IMR-90 (cell line): ENCODE measurements at regions of chr1 and their contacts with region 1.

Region 1: DNA sequence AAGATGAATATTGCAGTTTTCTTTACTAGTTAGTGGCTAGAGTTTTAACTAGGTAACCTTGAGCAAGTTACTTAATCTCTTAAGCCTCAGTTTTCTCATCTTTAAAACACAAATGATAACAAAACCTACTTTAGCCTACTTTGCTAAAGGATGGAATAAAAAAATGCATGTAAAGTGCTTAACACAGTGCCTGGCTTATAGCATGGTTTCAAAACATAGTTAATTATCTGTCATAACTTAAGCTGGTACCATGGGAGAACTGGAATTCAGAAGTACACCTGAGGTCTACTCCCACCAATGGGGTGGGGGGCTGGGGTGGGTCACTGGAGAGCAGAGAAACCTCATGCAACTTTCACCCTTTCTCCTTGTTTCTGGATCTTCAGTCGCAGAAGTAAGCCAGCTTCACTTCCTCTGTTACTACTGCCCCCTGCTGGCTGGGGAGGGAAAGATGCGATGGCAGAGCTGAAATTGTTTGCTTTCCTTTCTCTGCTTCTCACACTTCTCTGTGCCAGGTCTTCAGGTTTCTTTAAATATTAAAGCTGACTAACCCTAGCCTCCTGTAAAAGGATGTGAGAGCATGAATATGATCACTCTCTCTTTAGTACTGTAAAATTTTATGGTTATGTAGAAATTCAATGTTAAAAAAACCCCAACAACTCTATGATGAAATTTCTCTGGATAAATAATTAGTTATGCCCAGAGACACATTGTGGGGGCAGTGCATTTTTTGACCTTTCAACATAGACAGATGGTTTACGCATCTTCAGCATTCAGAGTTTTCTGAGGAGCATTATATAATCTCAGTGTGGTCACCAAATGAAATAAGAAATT is 324.2 kb downstream of the HLX start:
- DNase-seq: peak; percentile 74
- ATAC-seq: peak; percentile 78
- H3K4me3 ChIP-seq: no peak overlapping the region
- H3K27ac ChIP-seq: no peak overlapping the region
- H3K4me1 ChIP-seq: no peaks in the 10 kb centered on the region
- H3K27me3 ChIP-seq: no peaks in the 10 kb centered on the region
- CTCF ChIP-seq: peak; percentile 89
- POLR2A ChIP-seq: no peak
- RAD21 ChIP-seq: peak; percentile 90

Region 2: DNA sequence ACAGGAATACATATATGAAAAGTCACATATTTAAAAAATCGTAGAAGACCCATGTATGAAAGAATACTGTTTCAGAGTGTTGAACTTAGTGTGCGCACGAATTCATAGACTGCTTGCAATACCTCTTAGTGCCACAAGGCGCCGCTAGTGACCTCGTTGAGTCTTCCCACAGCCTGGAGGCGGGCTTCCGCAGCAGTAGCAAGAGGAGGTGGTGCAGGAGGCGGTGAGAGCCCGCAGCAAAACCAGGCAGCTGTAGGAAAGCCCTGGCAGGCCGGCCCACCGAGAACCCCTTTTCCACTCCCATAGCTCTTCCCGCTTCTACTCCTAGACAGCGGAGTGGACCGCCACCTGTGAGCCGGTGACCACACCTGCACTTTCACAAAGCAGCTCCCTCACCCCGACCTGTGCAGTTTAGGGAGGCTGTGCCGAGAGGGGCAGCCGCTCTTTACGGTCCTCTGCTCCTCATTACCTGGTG is 393.2 kb before region 1 on chr1:
- CTCF ChIA-PET with region 1: interaction called, 4 read pairs
- POLR2A ChIA-PET with region 1: no interaction called
- dilution Hi-C with region 1: no loop called
- in situ Hi-C with region 1: no loop called
- intact Hi-C with region 1: loop called (anchors 1 kb)
- DNase-seq: peak; percentile 78
- ATAC-seq: peak; percentile 99
- H3K4me3 ChIP-seq: no peak overlapping the region
- H3K27ac ChIP-seq: no peak overlapping the region
- H3K4me1 ChIP-seq: peaks cover under 1% of the 10 kb centered on the region; the same call in 1 of the 2 replicates
- H3K27me3 ChIP-seq: peaks cover 6% of the 10 kb centered on the region; the same call in 1 of the 2 replicates
- CTCF ChIP-seq: peak; percentile 91
- POLR2A ChIP-seq: no peak
- RAD21 ChIP-seq: peak; percentile 78

Region 3: GRCh38 chr1:220879076-220879508 is 324.3 kb before region 1 on chr1 and contains the start of gene HLX:
- CTCF ChIA-PET with region 1: interaction called, 7 read pairs
- POLR2A ChIA-PET with region 1: interaction called, 9 read pairs
- dilution Hi-C with region 1: no loop called
- in situ Hi-C with region 1: loop called (anchors 10 kb)
- intact Hi-C with region 1: loop called (anchors 1 kb)
- DNase-seq: peak; percentile 92
- ATAC-seq: peak; percentile 90
- H3K4me3 ChIP-seq: peak within 1 kb of the TSS; percentile 62
- H3K27ac ChIP-seq: peak within 1 kb of the TSS; percentile 83
- H3K4me1 ChIP-seq: peaks cover 9% of the 10 kb centered on the region
- H3K27me3 ChIP-seq: no peaks in the 10 kb centered on the region
- CTCF ChIP-seq: no peak
- POLR2A ChIP-seq: peak; percentile 59; the same call in 1 of the 2 replicates
- RAD21 ChIP-seq: no peak
- total RNA-seq, gene HLX: 3.9 and 4.3 TPM in 2 replicates

Region 4: DNA sequence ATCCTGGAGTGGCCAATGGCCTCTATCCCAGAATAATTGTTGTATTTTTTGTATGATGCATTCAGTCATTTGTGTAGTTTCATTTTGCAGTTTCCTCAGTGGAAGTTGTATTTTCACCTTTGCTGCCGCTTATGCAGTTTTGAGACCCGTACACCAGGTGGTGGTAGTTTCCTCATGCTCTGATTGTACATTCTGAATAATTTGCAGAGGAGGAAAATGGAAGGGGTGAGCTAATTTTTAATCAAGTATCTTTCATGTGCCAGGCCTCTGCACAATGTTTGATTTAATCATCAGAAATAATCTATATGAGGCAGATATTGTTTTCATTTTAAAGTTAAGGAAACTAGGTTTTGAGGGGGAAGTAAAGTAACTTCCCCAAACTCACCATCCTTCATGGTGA is 294.7 kb before region 1 on chr1:
- CTCF ChIA-PET with region 1: interaction called, 8 read pairs
- POLR2A ChIA-PET with region 1: no interaction called
- dilution Hi-C with region 1: no loop called
- in situ Hi-C with region 1: loop called (anchors 5 kb)
- intact Hi-C with region 1: loop called (anchors 1 kb)
- DNase-seq: peak; percentile 44
- ATAC-seq: 0 out of 2 replicates have a peak, but pooled peaks have one; percentile 29
- H3K4me3 ChIP-seq: no peak overlapping the region
- H3K27ac ChIP-seq: no peak overlapping the region
- H3K4me1 ChIP-seq: no peaks in the 10 kb centered on the region
- H3K27me3 ChIP-seq: peaks cover 2% of the 10 kb centered on the region; the same call in 1 of the 2 replicates
- CTCF ChIP-seq: peak; percentile 60
- POLR2A ChIP-seq: no peak
- RAD21 ChIP-seq: peak; percentile 75

Region 5: GRCh38 chr1:221053889-221054288 is 149.6 kb before region 1 on chr1:
- CTCF ChIA-PET with region 1: no interaction called
- POLR2A ChIA-PET with region 1: no interaction called
- dilution Hi-C with region 1: no loop called
- in situ Hi-C with region 1: no loop called
- intact Hi-C with region 1: no loop called
- DNase-seq: no peak
- ATAC-seq: no peak
- H3K4me3 ChIP-seq: no peak overlapping the region
- H3K27ac ChIP-seq: no peak overlapping the region
- H3K4me1 ChIP-seq: no peaks in the 10 kb centered on the region
- H3K27me3 ChIP-seq: no peaks in the 10 kb centered on the region
- CTCF ChIP-seq: no peak
- POLR2A ChIP-seq: no peak
- RAD21 ChIP-seq: no peak

Region 6: DNA sequence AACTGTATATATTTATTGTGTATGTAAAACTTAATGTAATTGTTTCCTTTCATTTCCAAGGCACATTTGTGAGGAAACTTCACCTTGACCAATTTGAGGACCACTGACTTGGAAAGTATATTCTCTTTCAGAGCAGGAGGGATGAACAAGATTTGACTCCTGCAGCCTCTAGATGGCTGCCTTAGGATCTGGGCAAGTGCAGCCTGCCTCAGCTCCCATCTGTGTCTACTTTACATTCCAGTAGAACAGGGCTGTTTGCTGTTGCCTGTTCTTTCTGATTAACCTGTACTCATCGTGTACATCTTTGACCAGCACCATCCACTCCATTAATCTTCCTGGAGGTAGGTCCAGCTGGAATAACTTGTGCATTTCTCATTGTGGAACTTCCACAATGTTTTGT is 11.4 kb before region 1 on chr1:
- CTCF ChIA-PET with region 1: interaction called, 11 read pairs
- POLR2A ChIA-PET with region 1: no interaction called
- dilution Hi-C with region 1: no loop called
- in situ Hi-C with region 1: no loop called
- intact Hi-C with region 1: no loop called
- DNase-seq: no peak
- ATAC-seq: no peak
- H3K4me3 ChIP-seq: no peak overlapping the region
- H3K27ac ChIP-seq: no peak overlapping the region
- H3K4me1 ChIP-seq: no peaks in the 10 kb centered on the region
- H3K27me3 ChIP-seq: no peaks in the 10 kb centered on the region
- CTCF ChIP-seq: no peak
- POLR2A ChIP-seq: no peak
- RAD21 ChIP-seq: no peak

Region 7: GRCh38 chr1:221227872-221228337 is 24.5 kb after region 1 on chr1:
- CTCF ChIA-PET with region 1: no interaction called
- POLR2A ChIA-PET with region 1: no interaction called
- dilution Hi-C with region 1: no loop called
- in situ Hi-C with region 1: no loop called
- intact Hi-C with region 1: no loop called
- DNase-seq: no peak
- ATAC-seq: no peak
- H3K4me3 ChIP-seq: no peak overlapping the region
- H3K27ac ChIP-seq: no peak overlapping the region
- H3K4me1 ChIP-seq: no peaks in the 10 kb centered on the region
- H3K27me3 ChIP-seq: no peaks in the 10 kb centered on the region
- CTCF ChIP-seq: no peak
- POLR2A ChIP-seq: no peak
- RAD21 ChIP-seq: no peak